GM10248 (cell line): ENCODE measurements at regions of chr12 and their contacts with region 1.

Region 1: GRCh38 chr12:85855305-85855704 is 18.8 kb upstream of the NTS start:
- DNase-seq: no peak
- CTCF ChIP-seq: no peak

Region 2: GRCh38 chr12:85843606-85844285 is 11.6 kb before region 1 on chr12:
- CTCF ChIA-PET with region 1: interaction called, 23 read pairs
- POLR2A ChIA-PET with region 1: no interaction called
- DNase-seq: no peak
- CTCF ChIP-seq: no peak

Region 3: DNA sequence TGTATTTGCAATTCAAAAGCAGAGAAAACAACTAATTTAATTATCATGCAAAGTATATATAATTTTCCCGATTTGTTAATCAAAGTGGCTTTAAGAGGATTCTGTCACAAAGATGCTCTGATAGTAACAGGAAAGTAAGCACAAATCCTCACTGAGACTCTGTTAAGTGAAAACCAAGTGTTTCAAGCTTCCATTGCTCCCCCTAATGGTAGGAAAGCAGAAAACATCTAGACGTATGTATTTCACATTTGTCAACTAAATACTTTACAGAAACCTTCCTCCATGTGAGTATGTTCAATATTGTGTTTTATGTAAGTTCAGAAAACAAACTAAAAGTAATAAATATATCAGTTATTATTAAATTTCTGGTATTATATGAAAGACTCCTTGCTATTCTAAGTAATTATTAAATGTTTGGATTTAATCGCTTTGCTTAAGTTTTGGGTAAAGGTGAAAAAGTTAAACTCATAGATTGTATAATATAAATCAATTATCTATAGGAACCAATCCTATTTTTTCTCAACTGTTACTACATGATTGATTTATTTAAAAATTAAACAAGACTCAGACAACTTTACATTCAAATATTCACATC is 17.3 kb after region 1 on chr12:
- CTCF ChIA-PET with region 1: interaction called, 46 read pairs
- POLR2A ChIA-PET with region 1: no interaction called
- DNase-seq: peak; percentile 33
- CTCF ChIP-seq: peak; percentile 76